Dorsolateral prefrontal cortex (tissue), 120 donors: ENCODE measurements at regions of chr2 and their contacts with region 1.

Region 1: DNA sequence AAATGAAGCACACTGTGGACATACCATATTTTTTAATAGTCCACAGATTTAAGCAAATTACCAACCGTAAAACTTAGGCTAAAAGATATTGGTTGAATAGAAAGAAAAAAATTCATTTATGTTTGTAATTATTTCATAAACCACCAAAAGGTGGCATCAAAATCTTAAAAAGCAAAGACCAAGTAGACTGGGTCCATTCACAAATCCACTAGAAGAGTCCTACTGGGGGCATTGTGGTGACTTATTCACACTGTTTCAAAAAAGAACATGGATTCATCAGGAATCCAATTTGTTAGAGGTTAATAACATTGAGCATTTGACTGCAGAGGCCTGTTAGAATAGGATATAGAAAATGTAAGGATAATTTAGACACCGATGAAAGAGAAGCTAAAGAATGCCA is 194.9 kb upstream of the KYNU start:
- DNase-seq: no peak
- H3K4me3 ChIP-seq: no peak overlapping the region
- H3K27ac ChIP-seq: no peak overlapping the region
- H3K27me3 ChIP-seq: peaks cover 0 to 3% (median 0%) of the 10 kb centered on the region in 45 donors
- CTCF ChIP-seq: peak in 54 of 56 donors; percentile 22 to 72 (median 42)

Region 2: DNA sequence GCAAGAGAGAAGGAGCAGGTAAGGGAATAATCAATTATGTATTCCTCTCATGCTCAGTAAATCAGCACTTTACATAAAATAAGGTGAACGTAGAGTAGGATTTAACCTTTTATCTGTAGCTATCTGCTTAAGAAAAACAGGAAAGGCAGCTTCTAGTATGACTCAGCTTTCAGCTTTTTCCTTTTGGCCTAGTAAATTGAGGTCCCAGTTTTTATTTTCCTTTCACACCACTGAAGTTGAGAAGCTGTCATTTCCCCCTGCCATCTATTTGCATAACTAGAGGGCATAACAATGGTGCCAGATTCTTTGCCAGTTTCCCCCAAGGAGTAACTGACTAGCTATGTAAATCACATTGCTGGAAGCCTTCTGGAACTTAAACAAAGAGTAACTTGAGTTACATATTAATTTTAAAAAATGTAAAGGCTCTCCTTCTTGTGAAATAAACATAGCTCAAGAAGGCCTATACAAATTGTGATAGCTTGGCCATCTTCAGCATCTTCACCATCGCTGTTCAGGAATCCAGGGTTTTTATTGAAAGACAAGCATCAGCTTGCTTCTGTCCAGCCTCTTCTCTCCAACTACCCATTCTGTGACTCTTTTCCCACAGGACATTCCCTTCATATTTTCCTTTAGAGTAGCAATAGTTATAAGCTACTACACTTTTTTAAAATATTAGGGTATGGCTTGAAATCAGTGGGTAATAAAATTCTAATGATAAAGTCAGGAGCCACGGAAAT is 291.9 kb after region 1 on chr2:
- intact Hi-C with region 1: loop called in 1 of 2 experiments (anchors 5 kb)
- DNase-seq: no peak
- H3K4me3 ChIP-seq: no peak overlapping the region
- H3K27ac ChIP-seq: peak overlapping the region in 17 of 59 donors; percentile 1 to 52 (median 18)
- H3K27me3 ChIP-seq: no peaks in the 10 kb centered on the region
- CTCF ChIP-seq: no peak

Region 3: DNA sequence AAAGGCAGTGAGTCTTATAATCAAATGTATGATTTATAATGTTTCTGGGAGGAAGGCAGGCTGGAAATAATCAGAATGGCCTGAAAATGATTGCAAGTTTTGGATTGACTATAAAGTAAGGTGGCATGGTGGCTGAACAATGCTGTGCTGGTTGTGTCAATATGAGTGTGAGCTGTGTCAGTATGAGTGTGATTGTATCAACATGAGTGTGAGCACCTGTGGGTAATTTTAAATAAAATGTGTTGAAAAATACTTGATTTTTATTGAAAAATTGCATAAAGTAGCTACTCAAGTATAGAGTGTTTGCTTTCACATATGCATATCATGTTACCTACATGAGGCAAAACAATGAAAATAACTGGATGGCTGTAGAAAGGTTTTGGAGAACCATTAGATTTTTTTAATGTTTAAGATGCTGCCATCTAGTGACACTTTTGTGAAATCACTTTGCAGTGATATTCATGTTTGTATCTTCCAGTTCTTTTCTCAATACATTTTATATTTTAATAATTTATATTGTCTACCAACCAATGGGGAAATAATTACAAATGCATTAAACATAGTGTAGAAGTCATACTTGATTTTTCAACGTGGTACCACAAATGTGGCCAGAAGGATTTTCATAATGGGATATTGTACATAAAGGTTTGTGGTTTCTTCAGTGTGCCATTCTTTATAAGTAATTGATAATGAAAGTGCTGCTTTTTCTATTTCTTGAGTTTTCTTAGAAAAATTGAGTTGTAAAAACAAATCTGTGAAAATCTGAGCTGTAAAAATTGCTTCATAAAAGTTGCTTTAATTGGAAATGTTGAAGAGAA is 298.2 kb after region 1 on chr2:
- intact Hi-C with region 1: loop called (anchors 2 to 5 kb)
- DNase-seq: no peak
- H3K4me3 ChIP-seq: no peak overlapping the region
- H3K27ac ChIP-seq: no peak overlapping the region
- H3K27me3 ChIP-seq: no peaks in the 10 kb centered on the region
- CTCF ChIP-seq: peak; percentile 54 to 88 (median 72)